ENCODE measurements at regions of chr10 and their contacts with region 1.

Region 1: GRCh38 chr10:96642973-96643372 is 56.2 kb upstream of the TM9SF3 start:
- DNase-seq: no peak
- ATAC-seq: peak; percentile 78
- H3K4me3 ChIP-seq: no peak overlapping the region
- H3K27ac ChIP-seq: no peak overlapping the region
- H3K4me1 ChIP-seq: peaks cover 34% of the 10 kb centered on the region
- H3K27me3 ChIP-seq: no peaks in the 10 kb centered on the region
- CTCF ChIP-seq: peak; percentile 74 to 94 (median 85)
- EP300 ChIP-seq: no peak
- POLR2A ChIP-seq: no peak
- RAD21 ChIP-seq: peak; percentile 92

Region 2: DNA sequence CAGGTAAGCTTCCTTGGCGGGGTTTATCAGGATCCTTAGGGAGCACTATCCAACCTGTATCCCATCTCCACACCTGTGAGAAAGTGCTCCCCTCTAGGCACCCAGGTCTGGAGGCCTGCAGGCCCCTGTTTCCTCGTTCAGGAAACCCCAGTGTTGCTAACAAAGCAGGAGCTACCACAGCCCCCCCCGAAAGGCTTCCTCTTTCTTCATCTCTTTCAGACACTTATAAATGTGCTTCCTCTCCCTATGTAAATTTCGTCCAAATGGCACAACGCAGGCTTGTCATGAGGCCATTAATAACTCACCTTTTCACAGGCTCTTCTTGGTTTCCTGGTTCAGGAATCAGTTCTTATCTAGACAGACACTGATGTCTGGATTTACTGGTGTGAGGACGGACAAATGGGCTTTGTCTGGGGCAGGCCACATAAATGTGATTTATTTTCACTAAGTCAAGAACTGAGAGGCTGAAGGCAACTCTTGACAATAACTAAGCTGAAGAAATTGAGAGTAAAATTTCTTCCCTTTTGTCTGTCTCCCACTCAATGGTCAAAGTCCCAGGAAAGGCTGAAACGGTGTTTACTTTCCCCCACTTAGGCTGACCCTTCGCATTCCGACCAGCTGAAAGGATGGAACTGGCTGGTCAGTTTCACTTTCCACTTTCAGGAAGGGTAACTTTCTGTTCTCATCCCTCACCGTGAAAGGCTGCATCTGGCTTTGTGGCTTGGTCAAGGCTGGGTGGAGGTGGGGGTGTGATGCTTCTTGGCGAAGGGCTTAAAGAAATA is 30.5 kb after region 1 on chr10:
- CTCF ChIA-PET with region 1: interaction called, 9 read pairs
- POLR2A ChIA-PET with region 1: interaction called, 5 read pairs
- RAD21 ChIA-PET with region 1: interaction called, 4 read pairs
- SMC1A ChIA-PET with region 1: interaction called, 35 read pairs
- in situ Hi-C with region 1: no loop called
- intact Hi-C with region 1: no loop called
- DNase-seq: peak; percentile 67
- ATAC-seq: peak; percentile 80
- H3K4me3 ChIP-seq: peak overlapping the region; percentile 54; the same call in 1 of the 2 replicates
- H3K27ac ChIP-seq: peak overlapping the region; percentile 40
- H3K4me1 ChIP-seq: peaks cover 79% of the 10 kb centered on the region
- H3K27me3 ChIP-seq: no peaks in the 10 kb centered on the region
- CTCF ChIP-seq: no peak
- EP300 ChIP-seq: peak in 1 of 2 experiments; percentile 8; a peak in 1 of 4 replicates
- POLR2A ChIP-seq: no peak
- RAD21 ChIP-seq: no peak

Region 3: DNA sequence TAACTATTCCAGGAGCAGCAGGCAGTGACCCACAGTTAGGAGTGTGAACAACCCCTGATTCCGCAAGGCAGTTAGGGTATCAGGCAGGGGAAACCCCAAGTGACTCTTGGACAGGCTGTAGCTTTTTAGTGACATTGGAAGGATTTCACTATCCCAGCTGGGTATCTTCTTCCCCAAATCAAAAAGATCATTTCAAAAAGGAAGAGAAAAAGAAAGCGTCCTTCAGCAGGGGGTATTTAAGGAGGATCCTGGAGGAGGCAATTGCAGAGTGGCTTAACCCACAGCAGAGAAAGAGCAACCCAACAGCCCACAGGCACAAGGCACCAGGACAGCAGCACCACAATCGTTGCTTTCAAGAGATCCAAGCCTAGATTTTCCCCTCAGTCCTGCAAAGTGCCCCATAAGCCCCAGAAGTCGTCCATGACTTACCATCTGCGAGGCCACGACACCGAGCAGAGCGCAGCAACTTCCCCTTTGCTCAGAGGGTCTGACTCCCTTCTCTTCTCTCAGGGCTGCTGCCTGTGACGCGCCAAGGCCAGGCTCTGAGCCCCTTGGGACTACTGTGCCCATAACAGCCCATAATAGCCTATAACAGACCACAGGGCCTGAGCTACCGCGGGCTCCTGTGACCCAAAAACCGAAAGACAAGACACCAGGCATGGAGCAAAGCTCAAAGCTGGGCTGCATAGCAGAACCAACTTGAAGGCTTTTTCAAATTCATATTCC is 57.6 kb after region 1 on chr10:
- CTCF ChIA-PET with region 1: interaction called, 9 read pairs
- POLR2A ChIA-PET with region 1: interaction called, 8 read pairs
- RAD21 ChIA-PET with region 1: interaction called, 33 read pairs
- SMC1A ChIA-PET with region 1: interaction called, 95 read pairs
- in situ Hi-C with region 1: no loop called
- intact Hi-C with region 1: loop called (anchors 1 kb)
- DNase-seq: no peak
- ATAC-seq: peak; percentile 78
- H3K4me3 ChIP-seq: peak overlapping the region; percentile 82
- H3K27ac ChIP-seq: peak overlapping the region; percentile 85
- H3K4me1 ChIP-seq: peaks cover 45% of the 10 kb centered on the region
- H3K27me3 ChIP-seq: no peaks in the 10 kb centered on the region
- CTCF ChIP-seq: no peak
- EP300 ChIP-seq: peak; percentile 59 to 79; a peak in 2 of 4 replicates
- POLR2A ChIP-seq: peak; percentile 87
- RAD21 ChIP-seq: no peak

Region 4: DNA sequence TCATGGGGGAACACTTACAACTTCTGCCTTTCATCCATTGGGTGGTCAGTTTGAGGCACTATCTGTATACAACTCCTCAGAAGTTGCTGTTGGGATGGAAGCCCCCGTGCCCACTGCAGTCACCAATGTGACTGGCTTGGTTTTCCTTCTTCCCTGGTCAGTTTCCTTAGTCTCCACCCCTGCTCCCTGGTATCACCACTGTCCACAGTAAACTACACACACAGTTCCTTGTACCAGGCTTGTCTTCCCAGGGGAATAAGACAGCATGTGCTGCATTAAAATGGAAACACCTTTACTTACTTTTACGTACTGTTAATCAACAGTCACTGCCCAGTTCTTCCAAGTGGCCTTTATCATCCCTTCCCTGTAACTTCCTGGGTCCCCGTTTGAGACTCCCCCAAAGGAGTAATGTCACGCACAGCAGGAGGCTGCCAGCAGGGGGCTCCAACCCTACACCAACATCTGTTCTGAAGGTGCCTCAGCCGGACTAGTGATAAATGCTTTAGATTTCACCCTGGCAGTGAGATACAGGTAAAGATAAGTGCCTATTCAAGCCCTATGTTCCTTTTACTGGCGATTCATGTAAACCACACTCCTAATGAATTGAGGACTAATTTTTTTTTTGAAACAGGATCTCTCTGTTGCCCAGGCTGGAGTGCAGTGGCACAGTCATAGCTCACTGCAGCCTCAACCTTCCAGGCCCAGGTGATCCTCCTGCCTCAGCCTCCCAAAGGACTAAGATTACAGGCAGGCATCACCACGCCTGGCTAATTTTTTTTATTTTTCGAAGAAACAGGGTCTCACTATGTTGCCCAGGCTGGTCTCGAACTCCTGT is 122.7 kb after region 1 on chr10:
- CTCF ChIA-PET with region 1: interaction called, 34 read pairs
- POLR2A ChIA-PET with region 1: no interaction called
- RAD21 ChIA-PET with region 1: interaction called, 8 read pairs
- SMC1A ChIA-PET with region 1: interaction called, 7 read pairs
- in situ Hi-C with region 1: no loop called
- intact Hi-C with region 1: no loop called
- DNase-seq: no peak
- ATAC-seq: peak; percentile 94
- H3K4me3 ChIP-seq: no peak overlapping the region
- H3K27ac ChIP-seq: no peak overlapping the region
- H3K4me1 ChIP-seq: peaks cover 15% of the 10 kb centered on the region
- H3K27me3 ChIP-seq: no peaks in the 10 kb centered on the region
- CTCF ChIP-seq: peak; percentile 87 to 93 (median 89)
- EP300 ChIP-seq: no peak
- POLR2A ChIP-seq: no peak
- RAD21 ChIP-seq: peak; percentile 87

Region 5: GRCh38 chr10:96826438-96826837 is 183.5 kb after region 1 on chr10:
- CTCF ChIA-PET with region 1: interaction called, 9 read pairs
- POLR2A ChIA-PET with region 1: no interaction called
- RAD21 ChIA-PET with region 1: interaction called, 3 read pairs
- SMC1A ChIA-PET with region 1: interaction called, 5 read pairs
- in situ Hi-C with region 1: loop called (anchors 5 kb)
- intact Hi-C with region 1: loop called (anchors 1 kb)
- DNase-seq: no peak
- ATAC-seq: no peak
- H3K4me3 ChIP-seq: no peak overlapping the region
- H3K27ac ChIP-seq: no peak overlapping the region
- H3K4me1 ChIP-seq: peaks cover 5% of the 10 kb centered on the region
- H3K27me3 ChIP-seq: no peaks in the 10 kb centered on the region; a peak in 1 of 4 replicates
- CTCF ChIP-seq: no peak
- EP300 ChIP-seq: no peak
- POLR2A ChIP-seq: no peak
- RAD21 ChIP-seq: no peak

Region 6: GRCh38 chr10:96831867-96832720 is 189.1 kb after region 1 on chr10 and contains the start of gene LCOR:
- CTCF ChIA-PET with region 1: interaction called, 9 read pairs
- POLR2A ChIA-PET with region 1: no interaction called
- RAD21 ChIA-PET with region 1: interaction called, 3 read pairs
- SMC1A ChIA-PET with region 1: interaction called, 5 read pairs
- in situ Hi-C with region 1: loop called (anchors 5 kb)
- intact Hi-C with region 1: loop called (anchors 1 kb)
- DNase-seq: no peak
- ATAC-seq: peak; percentile 64
- H3K4me3 ChIP-seq: peak within 1 kb of the TSS; percentile 100
- H3K27ac ChIP-seq: peak within 1 kb of the TSS; percentile 80
- H3K4me1 ChIP-seq: peaks cover 12% of the 10 kb centered on the region
- H3K27me3 ChIP-seq: no peaks in the 10 kb centered on the region
- CTCF ChIP-seq: no peak
- EP300 ChIP-seq: no peak
- POLR2A ChIP-seq: peak; percentile 90
- RAD21 ChIP-seq: no peak
- polyA plus RNA-seq, gene LCOR: 1.6 to 6.1 TPM

Region 7: DNA sequence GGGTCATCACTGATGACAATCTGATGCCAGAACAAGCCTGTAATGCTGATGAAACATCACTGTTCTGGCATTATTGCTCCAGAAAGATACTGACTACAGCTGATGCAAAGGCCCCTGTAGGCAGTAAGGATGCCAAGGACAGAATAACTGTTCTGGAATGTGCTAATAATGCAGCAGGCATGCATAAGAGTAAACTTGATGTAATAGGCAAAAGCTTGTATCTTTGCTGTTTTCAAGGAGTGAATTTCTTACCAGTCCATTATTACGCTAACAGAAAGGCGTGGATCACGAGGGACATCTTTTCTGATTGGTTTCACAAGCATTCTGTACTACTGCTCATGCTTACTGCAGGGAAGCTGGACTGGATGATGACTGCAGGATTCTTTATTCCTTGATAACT is 207.9 kb after region 1 on chr10:
- CTCF ChIA-PET with region 1: no interaction called
- POLR2A ChIA-PET with region 1: no interaction called
- RAD21 ChIA-PET with region 1: no interaction called
- SMC1A ChIA-PET with region 1: no interaction called
- in situ Hi-C with region 1: no loop called
- intact Hi-C with region 1: no loop called
- DNase-seq: no peak
- ATAC-seq: no peak
- H3K4me3 ChIP-seq: no peak overlapping the region
- H3K27ac ChIP-seq: no peak overlapping the region
- H3K4me1 ChIP-seq: no peaks in the 10 kb centered on the region
- H3K27me3 ChIP-seq: no peaks in the 10 kb centered on the region
- CTCF ChIP-seq: no peak
- EP300 ChIP-seq: no peak
- POLR2A ChIP-seq: no peak
- RAD21 ChIP-seq: no peak

Region 8: DNA sequence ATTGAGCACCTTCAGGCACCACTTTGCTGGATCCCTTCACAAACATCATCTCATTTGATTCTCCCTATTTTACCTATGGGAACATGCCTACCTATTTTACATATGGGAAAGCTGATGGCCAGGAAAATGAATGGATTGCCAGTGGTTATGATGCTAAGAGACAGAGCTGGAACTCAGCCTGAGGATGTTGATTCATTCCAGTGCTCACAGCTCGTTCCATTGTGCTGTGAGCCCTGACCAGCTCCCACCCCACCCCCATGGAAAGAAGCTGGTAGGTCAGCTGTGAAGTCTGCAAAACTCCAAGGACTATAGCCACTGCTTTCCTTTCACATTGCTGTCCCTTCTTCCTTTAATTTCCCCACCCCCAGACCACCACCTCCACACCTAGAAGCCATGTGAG is 865.4 kb after region 1 on chr10:
- CTCF ChIA-PET with region 1: no interaction called
- POLR2A ChIA-PET with region 1: no interaction called
- RAD21 ChIA-PET with region 1: no interaction called
- SMC1A ChIA-PET with region 1: no interaction called
- in situ Hi-C with region 1: no loop called
- intact Hi-C with region 1: no loop called
- DNase-seq: no peak
- ATAC-seq: no peak
- H3K4me3 ChIP-seq: no peak overlapping the region
- H3K27ac ChIP-seq: no peak overlapping the region
- H3K4me1 ChIP-seq: peaks cover 3% of the 10 kb centered on the region; the same call in 1 of the 2 replicates
- H3K27me3 ChIP-seq: peaks cover 0 to 3% of the 10 kb centered on the region in 2 experiments; a peak in 2 of 4 replicates
- CTCF ChIP-seq: no peak
- EP300 ChIP-seq: no peak
- POLR2A ChIP-seq: no peak
- RAD21 ChIP-seq: no peak